ENCODE measurements at regions of chr12 and their contacts with region 1.

Region 1: DNA sequence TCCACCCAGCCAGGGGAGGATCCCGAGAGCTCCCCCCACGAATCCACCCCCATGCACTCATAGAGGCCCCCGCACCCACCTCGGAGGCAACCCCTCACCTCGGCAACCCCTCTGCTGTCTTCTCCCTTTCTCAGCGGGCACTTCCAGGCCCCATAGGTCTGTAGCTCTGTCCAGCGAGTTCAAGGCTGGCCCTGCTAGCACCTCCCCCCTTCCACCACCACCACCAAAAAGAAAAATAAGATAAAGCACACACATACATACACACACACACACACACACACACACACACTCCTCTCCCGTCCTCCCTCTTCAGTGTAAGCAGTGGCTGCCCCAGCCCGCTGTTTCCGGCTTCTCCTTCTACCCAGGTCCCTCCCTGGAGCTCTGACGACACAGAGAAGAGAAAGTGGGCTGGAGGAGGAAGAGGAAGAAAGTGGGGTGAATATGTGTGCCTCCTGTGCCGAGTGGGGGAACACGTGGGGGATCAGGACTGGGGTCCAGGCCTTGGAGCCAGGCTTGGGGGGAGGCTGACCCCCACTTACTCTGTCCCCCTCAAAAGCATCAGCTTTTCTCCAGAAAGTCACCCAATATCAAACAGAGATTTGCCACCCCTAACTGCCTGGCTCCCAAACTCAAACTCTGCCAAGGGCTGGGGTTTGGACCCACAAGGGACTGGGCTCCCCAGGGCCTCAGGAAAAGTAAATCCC is at the start of gene STAT6:
- H3K4me3 ChIP-seq: peak within 1 kb of the TSS; percentile 40
- H3K27ac ChIP-seq: peak within 1 kb of the TSS; percentile 67
- H3K4me1 ChIP-seq: 0 out of 2 replicates have a peak, but pooled peaks cover 3% of the 10 kb centered on the region
- CTCF ChIP-seq: no peak

Region 2: DNA sequence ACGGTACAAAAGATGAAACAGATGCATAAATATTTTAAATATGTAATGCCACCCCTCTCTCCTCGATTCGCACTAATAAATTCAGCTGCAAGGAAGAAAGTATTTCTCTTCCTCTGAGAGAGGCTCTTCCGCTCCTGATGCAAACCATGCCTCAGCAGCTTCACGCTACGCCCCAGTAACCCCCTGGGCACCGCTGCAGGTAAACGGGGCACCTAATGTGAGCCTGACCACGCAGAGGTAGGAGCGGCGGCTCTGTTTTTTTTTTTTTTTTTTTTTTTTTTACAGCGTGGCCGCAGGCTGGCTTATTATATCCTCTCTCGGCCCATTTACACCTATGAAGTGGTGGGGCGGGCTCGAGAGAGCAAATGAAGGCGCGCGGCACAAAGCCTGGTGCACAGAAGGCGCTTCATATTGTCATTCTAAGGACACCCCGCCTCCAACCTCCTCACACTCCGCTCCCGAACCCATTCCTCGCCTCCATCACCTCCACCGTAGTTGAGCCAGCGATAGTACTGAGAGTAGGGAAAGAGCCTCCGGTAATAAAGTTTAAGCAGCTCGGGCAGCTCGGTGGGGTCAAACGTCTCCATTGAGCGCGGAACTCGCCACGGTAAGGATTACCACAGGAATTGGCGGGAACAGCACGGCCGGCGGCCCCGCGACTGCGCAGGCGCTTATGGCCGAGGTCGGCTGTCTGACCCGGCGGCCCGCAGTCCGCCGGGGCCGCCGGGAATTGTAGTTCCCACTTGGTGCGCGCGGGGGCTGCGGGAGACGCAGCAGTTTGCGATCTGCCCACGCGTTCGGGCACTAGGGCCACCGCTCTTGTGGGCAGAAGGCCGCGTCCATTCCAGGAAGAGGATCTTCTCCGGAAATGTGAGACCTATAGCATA is 359.2 kb before region 1 on chr12 and contains the start of gene PRIM1:
- CTCF ChIA-PET with region 1: interaction called, 35 read pairs
- POLR2A ChIA-PET with region 1: no interaction called
- H3K4me3 ChIP-seq: peak within 1 kb of the TSS; percentile 83
- H3K27ac ChIP-seq: peak within 1 kb of the TSS; percentile 80
- H3K4me1 ChIP-seq: peaks cover 6% of the 10 kb centered on the region
- CTCF ChIP-seq: 0 out of 2 replicates have a peak, but pooled peaks have one; percentile 12

Region 3: DNA sequence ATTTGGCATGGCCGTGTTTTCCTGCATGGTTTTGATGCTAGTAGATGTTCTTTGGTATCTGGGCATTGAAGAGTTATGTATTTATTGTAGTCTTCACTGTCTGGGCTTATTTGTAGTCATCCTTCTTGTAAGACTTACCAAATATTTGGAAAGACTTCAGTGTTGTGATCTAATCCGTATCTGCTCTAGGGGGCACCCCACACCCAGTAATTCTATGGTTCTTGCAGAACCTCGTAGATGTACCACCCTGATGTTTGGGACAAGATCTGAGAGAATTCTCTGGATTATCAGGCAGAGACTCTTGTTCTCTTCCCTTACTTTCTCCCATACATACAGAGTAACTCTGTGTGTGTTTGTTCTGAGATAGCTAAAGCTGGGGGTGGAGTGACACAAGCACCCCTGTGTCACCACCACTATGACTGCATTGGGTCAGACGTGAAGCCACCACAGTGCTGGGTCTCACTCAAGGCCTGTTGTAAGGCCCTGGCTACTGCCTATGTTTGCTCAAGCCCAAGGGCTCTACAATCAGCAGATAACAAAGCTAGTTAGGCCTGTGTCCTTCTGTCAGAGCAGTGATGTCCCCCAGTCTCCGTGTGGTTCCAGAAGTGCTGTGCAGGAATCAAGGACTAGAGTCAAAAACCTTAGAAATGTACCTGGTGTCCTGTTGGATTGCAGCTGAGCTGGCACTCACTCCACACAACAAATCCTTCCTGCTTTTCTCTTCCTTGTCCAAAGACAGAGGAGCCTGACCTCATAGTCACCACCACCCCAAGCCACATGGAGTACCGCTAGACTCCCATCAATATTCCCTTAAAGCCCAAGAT is 163.3 kb before region 1 on chr12:
- CTCF ChIA-PET with region 1: no interaction called
- POLR2A ChIA-PET with region 1: no interaction called
- H3K4me3 ChIP-seq: no peak overlapping the region
- H3K27ac ChIP-seq: no peak overlapping the region
- H3K4me1 ChIP-seq: no peaks in the 10 kb centered on the region
- CTCF ChIP-seq: no peak

Region 4: GRCh38 chr12:57005980-57006808 is 105.0 kb before region 1 on chr12 and contains the start of gene ZBTB39:
- CTCF ChIA-PET with region 1: interaction called, 60 read pairs
- POLR2A ChIA-PET with region 1: interaction called, 3 read pairs
- H3K4me3 ChIP-seq: peak within 1 kb of the TSS; percentile 81
- H3K27ac ChIP-seq: peak within 1 kb of the TSS; percentile 54; the same call in 1 of the 2 replicates
- H3K4me1 ChIP-seq: peaks cover 4% of the 10 kb centered on the region; the same call in 1 of the 2 replicates
- CTCF ChIP-seq: peak; percentile 40; the same call in 1 of the 2 replicates

Region 5: DNA sequence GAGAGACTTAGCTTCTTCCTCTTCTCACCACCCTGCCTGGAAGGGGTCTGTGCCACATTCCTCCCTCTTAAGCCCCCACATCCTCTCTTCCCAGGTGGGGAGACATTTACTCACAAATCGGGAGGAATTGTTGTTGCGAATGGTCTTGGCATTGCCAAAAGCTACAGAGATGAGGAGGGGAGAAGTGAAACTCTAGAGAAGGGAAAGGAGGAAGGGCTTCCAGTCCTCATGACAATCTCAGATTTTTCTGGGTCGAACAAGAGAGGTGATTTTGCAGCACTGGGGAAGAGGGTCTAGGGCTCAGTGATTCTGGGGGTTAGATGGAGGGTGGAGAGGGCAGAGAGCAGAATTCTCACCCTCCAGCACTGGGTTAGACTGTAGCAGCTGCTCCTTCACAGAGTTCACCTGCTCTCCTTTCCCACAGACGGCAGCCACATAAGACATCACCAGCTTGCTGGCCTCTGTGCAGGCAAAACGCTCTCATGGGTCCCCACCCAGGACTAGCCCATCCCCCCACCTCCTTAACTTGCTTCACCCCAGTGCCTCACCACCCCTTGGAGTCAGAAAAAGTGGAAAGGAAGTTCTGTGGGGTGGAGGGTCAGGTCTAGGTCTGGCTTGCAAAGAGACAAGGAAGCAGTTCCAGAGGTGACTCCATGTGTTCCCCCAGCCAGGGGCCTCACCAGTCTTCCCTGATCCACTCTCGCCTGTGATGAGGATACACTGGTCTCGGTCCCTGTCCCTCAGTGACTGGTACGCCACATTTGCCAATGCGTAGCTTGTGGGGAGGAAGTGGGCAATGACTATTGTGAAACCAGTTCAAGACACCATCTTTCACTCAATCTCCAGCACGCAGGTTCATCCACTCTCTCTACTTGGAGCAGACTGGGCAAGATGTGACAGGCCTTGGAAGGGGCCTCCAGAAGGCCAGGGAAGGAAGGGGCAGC is 64.0 kb before region 1 on chr12:
- CTCF ChIA-PET with region 1: interaction called, 15 read pairs
- POLR2A ChIA-PET with region 1: interaction called, 8 read pairs
- H3K4me3 ChIP-seq: no peak overlapping the region
- H3K27ac ChIP-seq: no peak overlapping the region
- H3K4me1 ChIP-seq: no peaks in the 10 kb centered on the region
- CTCF ChIP-seq: no peak

Region 6: DNA sequence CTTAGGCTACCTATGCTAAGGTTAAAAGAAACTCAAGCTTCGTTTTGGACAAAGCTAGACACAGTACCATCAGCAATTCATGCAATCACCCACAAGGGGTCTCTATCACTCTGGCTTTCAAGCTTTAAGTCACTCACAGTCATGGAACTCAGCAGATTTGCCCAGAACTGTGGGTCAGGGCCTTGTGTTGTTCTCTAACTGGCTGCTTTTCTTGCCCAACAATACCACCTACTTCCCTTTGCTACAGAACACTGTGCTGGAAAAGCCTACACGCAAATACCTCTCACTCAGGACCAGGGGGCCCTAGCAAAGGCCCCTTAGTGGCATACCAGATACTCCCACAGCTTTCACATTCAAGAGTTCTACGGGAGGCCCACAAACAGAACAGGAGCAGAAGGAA is 41.7 kb before region 1 on chr12:
- CTCF ChIA-PET with region 1: interaction called, 135 read pairs
- POLR2A ChIA-PET with region 1: interaction called, 47 read pairs
- H3K4me3 ChIP-seq: no peak overlapping the region
- H3K27ac ChIP-seq: no peak overlapping the region
- H3K4me1 ChIP-seq: no peaks in the 10 kb centered on the region
- CTCF ChIP-seq: peak; percentile 69

Region 7: GRCh38 chr12:57088459-57089248 is 22.5 kb before region 1 on chr12 and contains the start of gene NAB2:
- CTCF ChIA-PET with region 1: interaction called, 18 read pairs
- POLR2A ChIA-PET with region 1: interaction called, 24 read pairs
- H3K4me3 ChIP-seq: peak within 1 kb of the TSS; percentile 84
- H3K27ac ChIP-seq: peak within 1 kb of the TSS; percentile 80
- H3K4me1 ChIP-seq: peaks cover 12% of the 10 kb centered on the region
- CTCF ChIP-seq: no peak; the same call in 1 of the 2 replicates

Region 8: DNA sequence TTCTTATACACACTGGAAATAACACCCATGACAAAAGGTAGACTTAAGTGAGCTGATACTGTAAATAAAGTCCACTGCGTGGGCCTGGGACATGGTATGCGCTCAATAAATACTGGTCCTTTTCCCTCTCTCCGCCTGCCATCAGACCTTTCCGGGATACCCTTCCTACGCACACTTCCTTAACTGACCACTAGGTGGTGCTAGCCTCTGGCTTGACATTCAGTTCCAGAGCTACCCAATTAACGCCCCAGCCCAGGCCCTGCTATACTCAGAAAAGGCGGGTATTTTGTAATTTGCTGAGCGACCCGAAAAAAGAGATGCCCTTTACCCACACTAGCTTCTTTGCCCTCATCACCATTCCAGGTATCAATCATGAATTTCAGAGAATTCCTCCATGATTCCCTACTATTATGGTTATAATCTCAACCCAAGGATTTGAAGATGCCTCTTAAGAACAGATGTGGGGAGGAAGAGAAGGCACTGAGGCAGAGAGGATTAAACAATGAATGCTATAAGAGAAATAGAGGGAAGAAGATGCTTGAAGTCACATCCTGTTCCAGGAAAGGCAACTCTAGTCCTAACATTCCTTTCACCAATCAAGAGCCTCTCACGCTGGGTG is 13.2 kb after region 1 on chr12:
- CTCF ChIA-PET with region 1: interaction called, 43 read pairs
- POLR2A ChIA-PET with region 1: interaction called, 27 read pairs
- H3K4me3 ChIP-seq: no peak overlapping the region
- H3K27ac ChIP-seq: no peak overlapping the region
- H3K4me1 ChIP-seq: peaks cover 10% of the 10 kb centered on the region
- CTCF ChIP-seq: peak; percentile 62; the same call in 1 of the 2 replicates

Measured in HEK293 (cell line).